Naive thymus-derived CD4-positive, alpha-beta T cell (primary cell): ENCODE measurements at regions of chr7 and their contacts with region 1.

Region 1: DNA sequence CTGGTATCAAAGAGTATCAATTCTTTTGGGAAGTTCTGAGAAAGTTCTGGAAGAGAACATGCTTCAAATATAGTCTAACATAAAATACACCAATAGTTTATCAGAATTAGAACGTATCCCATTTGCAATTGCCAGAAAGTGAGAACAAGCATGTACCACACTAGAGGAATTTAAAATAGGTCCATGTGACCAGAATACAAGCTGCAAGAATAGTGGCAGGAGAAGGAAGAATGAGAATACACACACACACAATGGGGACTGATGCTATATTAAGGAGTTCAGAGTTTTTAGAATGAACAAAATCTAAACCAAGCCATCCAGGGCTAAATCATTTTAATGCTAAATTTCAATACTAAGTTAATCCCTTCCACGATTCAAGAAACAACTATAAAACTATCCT is 99.1 kb upstream of the TMEM168 start:
- DNase-seq: no peak
- ATAC-seq: no peak
- H3K4me3 ChIP-seq: no peak overlapping the region
- H3K4me3 Mint-ChIP-seq: no peak overlapping the region
- H3K27ac ChIP-seq: no peak overlapping the region
- H3K27ac Mint-ChIP-seq: no peak overlapping the region
- H3K4me1 ChIP-seq: no peaks in the 10 kb centered on the region
- H3K4me1 Mint-ChIP-seq: peaks cover 0 to 44% (median 19%) of the 10 kb centered on the region in 7 donors
- H3K27me3 ChIP-seq: no peaks in the 10 kb centered on the region
- H3K27me3 Mint-ChIP-seq: no peaks in the 10 kb centered on the region

Region 2: DNA sequence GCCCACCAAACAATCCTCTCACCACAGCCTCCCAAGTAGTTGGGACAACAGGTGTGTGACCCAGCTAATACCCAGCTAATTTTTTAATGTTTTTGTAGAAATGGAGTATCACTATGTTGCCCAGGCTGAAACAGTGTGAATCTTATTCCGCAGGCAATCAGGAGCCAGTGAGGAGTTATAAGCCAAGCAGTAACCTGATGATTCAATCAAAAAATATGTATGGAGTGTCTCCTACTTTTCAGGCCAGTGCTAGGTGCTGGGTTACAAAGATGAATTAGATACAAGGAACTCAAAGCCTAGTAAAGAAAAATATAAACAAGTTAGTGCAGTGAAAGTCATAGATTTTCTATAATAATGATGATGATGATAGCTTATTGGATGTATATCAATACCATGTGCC is 452.2 kb before region 1 on chr7:
- CTCF ChIA-PET with region 1: no interaction called
- POLR2A ChIA-PET with region 1: no interaction called
- intact Hi-C with region 1: no loop called
- DNase-seq: no peak
- ATAC-seq: no peak
- H3K4me3 ChIP-seq: no peak overlapping the region
- H3K4me3 Mint-ChIP-seq: no peak overlapping the region
- H3K27ac ChIP-seq: no peak overlapping the region
- H3K27ac Mint-ChIP-seq: no peak overlapping the region
- H3K4me1 ChIP-seq: no peaks in the 10 kb centered on the region
- H3K4me1 Mint-ChIP-seq: no peaks in the 10 kb centered on the region
- H3K27me3 ChIP-seq: no peaks in the 10 kb centered on the region
- H3K27me3 Mint-ChIP-seq: peaks cover 0 to 14% (median 4%) of the 10 kb centered on the region in 5 donors

Region 3: GRCh38 chr7:112858838-112859237 is 30.4 kb before region 1 on chr7:
- CTCF ChIA-PET with region 1: no interaction called
- POLR2A ChIA-PET with region 1: no interaction called
- intact Hi-C with region 1: no loop called
- DNase-seq: no peak
- ATAC-seq: no peak
- H3K4me3 ChIP-seq: no peak overlapping the region
- H3K4me3 Mint-ChIP-seq: no peak overlapping the region
- H3K27ac ChIP-seq: no peak overlapping the region
- H3K27ac Mint-ChIP-seq: no peak overlapping the region
- H3K4me1 ChIP-seq: no peaks in the 10 kb centered on the region
- H3K4me1 Mint-ChIP-seq: peaks cover 0 to 6% (median 0%) of the 10 kb centered on the region in 7 donors
- H3K27me3 ChIP-seq: no peaks in the 10 kb centered on the region
- H3K27me3 Mint-ChIP-seq: no peaks in the 10 kb centered on the region

Region 4: GRCh38 chr7:112869111-112869757 is 20.0 kb before region 1 on chr7:
- CTCF ChIA-PET with region 1: no interaction called
- POLR2A ChIA-PET with region 1: no interaction called
- intact Hi-C with region 1: loop called in 1 of 2 experiments (anchors 2 kb)
- DNase-seq: peak in 8 of 9 donors; percentile 2 to 53 (median 37)
- ATAC-seq: peak; percentile 71
- H3K4me3 ChIP-seq: no peak overlapping the region
- H3K4me3 Mint-ChIP-seq: no peak overlapping the region
- H3K27ac ChIP-seq: no peak overlapping the region
- H3K27ac Mint-ChIP-seq: no peak overlapping the region
- H3K4me1 ChIP-seq: no peaks in the 10 kb centered on the region
- H3K4me1 Mint-ChIP-seq: peaks cover 11 to 56% (median 45%) of the 10 kb centered on the region in 7 donors
- H3K27me3 ChIP-seq: no peaks in the 10 kb centered on the region
- H3K27me3 Mint-ChIP-seq: no peaks in the 10 kb centered on the region